ENCODE measurements at regions of chr2 and their contacts with region 1.

Region 1: GRCh38 chr2:130966775-130967490 is 126.3 kb downstream of the FAM168B start:
- DNase-seq: no peak
- H3K4me3 ChIP-seq: peak overlapping the region in 1 of 4 experiments; percentile 21; a peak in 4 of 8 replicates
- H3K27ac ChIP-seq: no peak overlapping the region
- H3K4me1 ChIP-seq: peaks cover 22 to 43% (median 27%) of the 10 kb centered on the region in 4 experiments
- H3K27me3 ChIP-seq: peaks cover 20 to 45% (median 38%) of the 10 kb centered on the region in 4 experiments
- CTCF ChIP-seq: no peak
- EP300 ChIP-seq: no peak
- POLR2A ChIP-seq: no peak
- RAD21 ChIP-seq: no peak

Region 2: DNA sequence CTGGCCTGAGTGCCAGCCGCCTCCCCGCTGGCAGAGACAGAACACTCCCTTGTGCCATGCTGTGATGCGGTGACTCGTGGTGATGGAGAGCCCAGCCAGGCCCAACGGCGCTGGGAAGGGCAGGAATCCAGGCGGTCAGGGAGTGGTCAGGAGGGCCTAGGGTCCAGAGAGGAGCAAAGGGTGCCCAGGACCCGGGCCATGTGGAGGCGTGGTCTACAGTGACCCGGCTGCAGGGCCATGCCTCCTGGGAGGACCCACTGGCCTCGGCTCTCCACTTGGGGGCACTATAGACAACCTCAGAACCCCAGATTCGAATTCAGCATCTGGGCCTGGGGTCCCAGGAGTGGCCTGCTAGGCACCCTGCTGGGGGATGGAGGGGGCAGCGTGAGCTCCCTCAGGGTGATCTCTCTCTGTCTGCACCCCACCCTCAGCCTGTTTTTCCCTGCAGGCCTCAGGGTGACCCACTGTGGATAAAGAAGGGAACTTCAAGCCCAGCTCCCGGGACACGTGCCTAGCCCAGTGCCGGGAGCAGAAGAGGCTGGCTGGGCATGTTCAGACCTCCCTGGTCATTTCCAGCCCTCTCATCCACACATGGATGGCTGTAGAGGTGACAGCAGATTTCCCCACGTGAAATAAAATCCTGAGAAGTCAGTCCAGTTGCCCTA is 198.6 kb before region 1 on chr2:
- CTCF ChIA-PET with region 1: no interaction called
- POLR2A ChIA-PET with region 1: no interaction called
- DNase-seq: no peak
- H3K4me3 ChIP-seq: no peak overlapping the region
- H3K27ac ChIP-seq: no peak overlapping the region
- H3K4me1 ChIP-seq: no peaks in the 10 kb centered on the region
- H3K27me3 ChIP-seq: no peaks in the 10 kb centered on the region
- CTCF ChIP-seq: peak; percentile 46 to 56 (median 50)
- EP300 ChIP-seq: no peak
- POLR2A ChIP-seq: no peak
- RAD21 ChIP-seq: peak; percentile 34 to 45

Region 3: DNA sequence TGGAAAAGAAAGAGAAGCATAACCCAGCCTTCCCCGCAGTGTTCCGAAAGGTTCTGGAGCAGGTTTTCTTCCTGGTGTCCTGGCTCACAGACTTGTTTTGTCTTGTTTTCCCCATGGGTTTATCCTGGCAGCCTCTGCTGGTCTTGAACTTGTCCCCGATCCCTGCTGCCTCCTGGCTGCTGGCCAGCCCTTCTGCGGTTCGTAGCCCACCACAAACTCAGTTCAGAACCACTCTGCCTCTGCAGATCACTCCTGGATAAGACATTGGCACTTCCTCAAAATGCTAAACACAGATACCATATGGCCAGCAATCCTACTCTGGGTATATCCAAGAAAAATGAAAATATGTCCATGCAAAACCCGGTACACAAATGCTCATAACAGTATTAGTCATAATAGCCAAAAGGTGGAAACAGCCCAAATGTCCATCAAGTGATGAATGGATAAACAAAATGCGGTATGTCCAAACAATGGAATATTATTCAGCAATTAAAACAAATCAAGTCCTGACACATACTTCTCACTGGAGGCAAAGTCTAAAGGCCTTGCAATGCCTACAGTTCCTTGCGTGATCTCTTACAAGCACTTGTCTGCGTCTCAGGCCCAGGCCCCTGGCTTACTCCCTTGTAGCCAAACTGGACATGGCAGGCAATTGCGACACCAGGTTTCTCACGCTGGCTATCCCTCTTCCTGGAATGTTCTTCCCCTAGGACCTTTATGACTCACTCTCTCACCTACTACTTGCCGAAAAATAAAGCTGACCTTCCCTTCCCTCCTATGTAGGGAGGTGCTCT is 158.3 kb before region 1 on chr2:
- CTCF ChIA-PET with region 1: no interaction called
- POLR2A ChIA-PET with region 1: no interaction called
- DNase-seq: no peak
- H3K4me3 ChIP-seq: no peak overlapping the region
- H3K27ac ChIP-seq: no peak overlapping the region
- H3K4me1 ChIP-seq: peaks cover 0 to 2% (median 0%) of the 10 kb centered on the region in 4 experiments; a peak in 1 of 7 replicates
- H3K27me3 ChIP-seq: no peaks in the 10 kb centered on the region
- CTCF ChIP-seq: no peak
- EP300 ChIP-seq: no peak
- POLR2A ChIP-seq: no peak
- RAD21 ChIP-seq: no peak

Region 4: DNA sequence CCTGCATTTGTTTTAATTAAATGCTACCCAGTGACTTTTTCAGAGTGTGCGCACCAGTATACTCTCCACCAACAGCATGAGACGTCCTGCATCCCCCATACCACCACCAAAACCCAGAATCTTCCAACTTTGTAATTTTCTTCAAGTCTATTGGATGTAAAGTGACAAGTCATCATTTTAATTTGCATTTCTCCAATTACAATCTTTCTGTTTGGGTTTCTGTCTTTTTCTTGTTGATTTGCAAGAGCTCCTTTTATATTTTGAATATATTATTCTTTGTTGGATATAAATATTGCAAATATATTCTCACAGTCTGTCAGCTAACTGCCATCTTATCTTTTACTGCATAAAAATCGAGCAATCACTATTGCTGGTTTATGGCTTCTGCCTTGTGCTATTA is 29.8 kb after region 1 on chr2:
- CTCF ChIA-PET with region 1: interaction called, 16 read pairs
- POLR2A ChIA-PET with region 1: no interaction called
- DNase-seq: no peak
- H3K4me3 ChIP-seq: no peak overlapping the region
- H3K27ac ChIP-seq: no peak overlapping the region
- H3K4me1 ChIP-seq: no peaks in the 10 kb centered on the region
- H3K27me3 ChIP-seq: no peaks in the 10 kb centered on the region
- CTCF ChIP-seq: no peak
- EP300 ChIP-seq: no peak
- POLR2A ChIP-seq: no peak
- RAD21 ChIP-seq: no peak

Region 5: GRCh38 chr2:131010566-131010965 is 43.6 kb after region 1 on chr2:
- CTCF ChIA-PET with region 1: no interaction called
- POLR2A ChIA-PET with region 1: no interaction called
- DNase-seq: no peak
- H3K4me3 ChIP-seq: no peak overlapping the region
- H3K27ac ChIP-seq: no peak overlapping the region
- H3K4me1 ChIP-seq: peaks cover 0 to 2% (median 0%) of the 10 kb centered on the region in 4 experiments; a peak in 1 of 7 replicates
- H3K27me3 ChIP-seq: no peaks in the 10 kb centered on the region
- CTCF ChIP-seq: no peak
- EP300 ChIP-seq: no peak
- POLR2A ChIP-seq: no peak
- RAD21 ChIP-seq: no peak

Measured in H1 (cell line).